ENCODE measurements at regions of chr18 and their contacts with region 1.

Region 1: GRCh38 chr18:59876310-59876626 is 23.5 kb upstream of the PMAIP1 start:
- DNase-seq: no peak
- H3K4me3 Mint-ChIP-seq: no peak overlapping the region
- H3K27ac Mint-ChIP-seq: no peak overlapping the region
- H3K4me1 Mint-ChIP-seq: peaks cover 14% of the 10 kb centered on the region
- H3K27me3 Mint-ChIP-seq: peaks cover 3% of the 10 kb centered on the region

Region 2: GRCh38 chr18:59514203-59514602 is 362.1 kb before region 1 on chr18:
- CTCF ChIA-PET with region 1: no interaction called
- POLR2A ChIA-PET with region 1: no interaction called
- intact Hi-C with region 1: no loop called
- DNase-seq: no peak
- H3K4me3 Mint-ChIP-seq: no peak overlapping the region
- H3K27ac Mint-ChIP-seq: no peak overlapping the region
- H3K4me1 Mint-ChIP-seq: no peaks in the 10 kb centered on the region
- H3K27me3 Mint-ChIP-seq: peaks cover 7% of the 10 kb centered on the region

Region 3: DNA sequence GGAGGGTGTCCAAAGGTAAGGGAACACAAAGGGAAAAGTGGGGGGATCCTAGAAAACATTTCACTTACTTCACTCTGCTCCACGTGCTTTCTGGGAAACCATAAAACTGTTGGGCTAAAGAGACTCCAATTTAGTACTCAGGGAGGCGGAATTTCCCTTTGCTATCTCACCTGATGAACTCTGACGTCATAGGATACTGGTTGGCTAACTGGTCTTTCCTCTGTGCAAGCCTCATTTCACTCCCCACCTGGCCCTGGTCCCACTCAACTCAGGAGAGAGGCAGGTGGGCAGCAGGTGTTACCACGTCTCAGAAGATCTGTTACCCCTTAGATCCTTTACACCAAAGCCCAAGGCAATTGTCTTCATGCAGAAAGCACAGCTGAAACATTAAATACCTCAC is 28.3 kb before region 1 on chr18:
- CTCF ChIA-PET with region 1: no interaction called
- POLR2A ChIA-PET with region 1: no interaction called
- intact Hi-C with region 1: no loop called
- DNase-seq: peak; percentile 18
- H3K4me3 Mint-ChIP-seq: no peak overlapping the region
- H3K27ac Mint-ChIP-seq: no peak overlapping the region
- H3K4me1 Mint-ChIP-seq: peaks cover 16% of the 10 kb centered on the region
- H3K27me3 Mint-ChIP-seq: no peaks in the 10 kb centered on the region

Region 4: GRCh38 chr18:59861963-59862819 is 14.1 kb before region 1 on chr18:
- CTCF ChIA-PET with region 1: no interaction called
- POLR2A ChIA-PET with region 1: no interaction called
- intact Hi-C with region 1: loop called (anchors 2 kb)
- DNase-seq: no peak
- H3K4me3 Mint-ChIP-seq: no peak overlapping the region
- H3K27ac Mint-ChIP-seq: no peak overlapping the region
- H3K4me1 Mint-ChIP-seq: no peaks in the 10 kb centered on the region
- H3K27me3 Mint-ChIP-seq: peaks cover 2% of the 10 kb centered on the region